ENCODE measurements at regions of chr3 and their contacts with region 1.

Region 1: GRCh38 chr3:106355873-106356272 is 487.1 kb upstream of the CBLB start:
- DNase-seq: no peak
- H3K4me3 ChIP-seq: no peak overlapping the region
- H3K4me3 Mint-ChIP-seq: no peak overlapping the region
- H3K27ac Mint-ChIP-seq: no peak overlapping the region
- H3K4me1 ChIP-seq: no peaks in the 10 kb centered on the region
- H3K4me1 Mint-ChIP-seq: no peaks in the 10 kb centered on the region
- H3K27me3 ChIP-seq: no peaks in the 10 kb centered on the region
- H3K27me3 Mint-ChIP-seq: no peaks in the 10 kb centered on the region
- CTCF ChIP-seq: no peak

Region 2: DNA sequence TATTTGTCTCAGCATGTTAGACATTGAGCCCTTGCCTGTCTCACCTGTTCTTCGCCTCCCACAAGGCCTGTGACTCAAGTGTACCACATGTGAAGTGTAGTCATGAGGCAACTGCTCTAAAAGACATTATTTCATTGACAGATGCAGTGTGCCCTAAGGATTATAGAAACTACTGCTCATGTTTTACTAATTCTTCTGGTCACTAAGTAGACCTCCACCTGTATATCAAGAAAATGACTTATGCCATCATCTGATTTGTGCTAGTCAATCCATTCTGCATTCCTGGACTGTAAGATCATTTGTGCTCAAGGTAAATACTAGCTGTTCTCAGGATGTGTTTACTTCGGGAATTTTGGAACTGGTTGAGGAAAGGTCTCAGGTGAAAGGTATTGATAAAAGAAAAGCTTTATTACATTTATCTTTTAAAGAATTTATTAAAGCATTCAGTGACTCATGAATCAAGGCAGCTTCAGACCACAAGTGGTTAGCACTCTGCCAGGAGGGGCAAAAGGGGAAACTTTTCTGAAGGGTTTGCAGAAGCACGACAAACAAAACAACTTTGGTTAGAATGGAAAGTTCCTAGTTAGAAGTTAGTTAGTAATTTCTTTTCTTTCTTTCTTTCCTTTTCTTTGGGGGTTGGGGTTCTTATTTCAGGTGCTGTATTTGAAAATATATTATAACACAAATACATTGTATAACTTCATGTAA is 21.8 kb before region 1 on chr3:
- CTCF ChIA-PET with region 1: no interaction called
- POLR2A ChIA-PET with region 1: no interaction called
- intact Hi-C with region 1: loop called (anchors 1 kb)
- DNase-seq: no peak
- H3K4me3 ChIP-seq: no peak overlapping the region
- H3K4me3 Mint-ChIP-seq: no peak overlapping the region
- H3K27ac Mint-ChIP-seq: no peak overlapping the region
- H3K4me1 ChIP-seq: no peaks in the 10 kb centered on the region
- H3K4me1 Mint-ChIP-seq: peaks cover 9% of the 10 kb centered on the region
- H3K27me3 ChIP-seq: no peaks in the 10 kb centered on the region
- H3K27me3 Mint-ChIP-seq: no peaks in the 10 kb centered on the region
- CTCF ChIP-seq: no peak

Measured in Caco-2 (cell line).